Endothelial cell of umbilical vein (primary cell): ENCODE measurements at regions of chr15 and their contacts with region 1.

Region 1: DNA sequence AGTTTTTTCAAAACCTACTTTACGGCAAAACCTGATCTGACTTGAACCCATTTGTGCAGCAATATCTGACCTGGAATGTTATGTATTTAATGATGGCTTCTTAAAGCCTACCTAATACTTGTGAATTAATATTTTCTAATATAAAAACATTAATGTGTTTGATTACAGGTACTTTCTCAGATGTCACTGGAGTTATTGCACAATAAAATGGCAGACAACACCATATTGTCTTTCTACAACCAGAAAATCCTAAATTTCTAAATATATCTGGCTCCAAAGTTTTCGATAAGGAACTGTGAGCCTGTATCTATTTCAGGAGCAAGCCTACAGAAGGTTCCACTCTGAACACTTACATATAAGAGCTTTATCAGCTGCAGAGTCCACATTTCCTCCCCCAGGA is 184.5 kb downstream of the ATP8B4 start:
- DNase-seq: no peak
- H3K4me3 ChIP-seq: no peak overlapping the region
- H3K27ac ChIP-seq: no peak overlapping the region
- H3K4me1 ChIP-seq: no peaks in the 10 kb centered on the region
- H3K27me3 ChIP-seq: no peaks in the 10 kb centered on the region
- CTCF ChIP-seq: no peak
- POLR2A ChIP-seq: no peak

Region 2: DNA sequence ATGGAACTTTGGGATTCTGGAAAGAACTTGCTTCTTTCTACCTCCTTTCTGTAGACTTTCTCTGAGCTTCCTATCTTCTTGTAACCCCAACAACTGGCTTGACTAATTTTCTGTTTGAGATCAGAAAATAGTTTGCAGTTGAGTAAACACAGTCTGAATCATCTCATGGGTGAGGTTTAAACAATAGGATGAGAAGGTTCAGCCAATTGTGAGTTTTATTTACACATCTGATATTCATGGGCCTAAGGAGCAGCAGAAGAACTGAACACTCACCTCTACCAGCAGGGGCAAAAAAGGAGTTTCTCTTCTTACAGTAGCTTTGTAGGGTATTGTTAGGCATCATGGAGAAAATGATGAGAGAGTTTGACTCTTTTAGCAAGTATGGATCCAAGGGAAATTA is 259.4 kb before region 1 on chr15:
- CTCF ChIA-PET with region 1: no interaction called
- POLR2A ChIA-PET with region 1: no interaction called
- dilution Hi-C with region 1: no loop called
- intact Hi-C with region 1: loop called (anchors 10 kb)
- DNase-seq: peak; percentile 5
- H3K4me3 ChIP-seq: no peak overlapping the region
- H3K27ac ChIP-seq: no peak overlapping the region
- H3K4me1 ChIP-seq: no peaks in the 10 kb centered on the region
- H3K27me3 ChIP-seq: peaks cover under 1 to 4% of the 10 kb centered on the region in 2 experiments
- CTCF ChIP-seq: no peak
- POLR2A ChIP-seq: no peak